Prostate gland (tissue), 2 donors: ENCODE measurements at regions of chr16 and their contacts with region 1.

Region 1: GRCh38 chr16:74275002-74275636 is 21.5 kb upstream of the PSMD7 start:
- DNase-seq: no peak
- H3K4me3 ChIP-seq: no peak overlapping the region
- H3K27ac ChIP-seq: no peak overlapping the region
- H3K4me1 ChIP-seq: no peaks in the 10 kb centered on the region
- H3K27me3 ChIP-seq: no peaks in the 10 kb centered on the region
- CTCF ChIP-seq: peak; percentile 23 to 52 (median 33)
- POLR2A ChIP-seq: no peak

Region 2: GRCh38 chr16:74064120-74064735 is 210.9 kb before region 1 on chr16:
- intact Hi-C with region 1: loop called (anchors 10 kb)
- DNase-seq: no peak
- H3K4me3 ChIP-seq: no peak overlapping the region
- H3K27ac ChIP-seq: no peak overlapping the region
- H3K4me1 ChIP-seq: no peaks in the 10 kb centered on the region
- H3K27me3 ChIP-seq: no peaks in the 10 kb centered on the region
- CTCF ChIP-seq: no peak
- POLR2A ChIP-seq: no peak

Region 3: GRCh38 chr16:74309789-74310781 is 35.0 kb after region 1 on chr16:
- intact Hi-C with region 1: no loop called
- DNase-seq: peak; percentile 31
- H3K4me3 ChIP-seq: no peak overlapping the region
- H3K27ac ChIP-seq: no peak overlapping the region
- H3K4me1 ChIP-seq: no peaks in the 10 kb centered on the region
- H3K27me3 ChIP-seq: no peaks in the 10 kb centered on the region
- CTCF ChIP-seq: peak; percentile 41 to 71 (median 52)
- POLR2A ChIP-seq: no peak

Region 4: DNA sequence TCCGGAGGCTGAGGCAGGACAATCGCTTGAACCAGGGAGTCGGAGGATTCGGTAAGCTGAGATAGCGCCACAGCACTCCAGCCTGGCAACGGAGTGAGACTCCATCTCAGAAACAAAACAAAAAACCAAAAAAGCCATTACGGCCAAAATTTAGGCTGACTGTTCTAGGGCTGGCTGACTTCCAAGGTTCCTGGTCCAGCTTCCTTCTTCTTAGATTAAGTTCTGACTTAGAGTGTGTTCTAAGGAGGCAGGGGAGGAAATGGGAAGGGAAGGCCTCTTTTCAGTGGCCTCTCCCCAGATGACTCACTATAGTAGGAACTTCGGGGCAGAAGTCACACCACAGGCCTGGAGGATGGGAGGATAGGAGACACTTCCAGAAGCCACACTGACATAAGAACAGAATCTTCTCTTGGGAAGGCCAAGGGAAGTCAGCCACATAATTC is 173.9 kb after region 1 on chr16:
- intact Hi-C with region 1: no loop called
- DNase-seq: no peak
- H3K4me3 ChIP-seq: no peak overlapping the region
- H3K27ac ChIP-seq: peak overlapping the region; percentile 33 to 51
- H3K4me1 ChIP-seq: no peaks in the 10 kb centered on the region
- H3K27me3 ChIP-seq: no peaks in the 10 kb centered on the region
- CTCF ChIP-seq: no peak
- POLR2A ChIP-seq: no peak

Region 5: DNA sequence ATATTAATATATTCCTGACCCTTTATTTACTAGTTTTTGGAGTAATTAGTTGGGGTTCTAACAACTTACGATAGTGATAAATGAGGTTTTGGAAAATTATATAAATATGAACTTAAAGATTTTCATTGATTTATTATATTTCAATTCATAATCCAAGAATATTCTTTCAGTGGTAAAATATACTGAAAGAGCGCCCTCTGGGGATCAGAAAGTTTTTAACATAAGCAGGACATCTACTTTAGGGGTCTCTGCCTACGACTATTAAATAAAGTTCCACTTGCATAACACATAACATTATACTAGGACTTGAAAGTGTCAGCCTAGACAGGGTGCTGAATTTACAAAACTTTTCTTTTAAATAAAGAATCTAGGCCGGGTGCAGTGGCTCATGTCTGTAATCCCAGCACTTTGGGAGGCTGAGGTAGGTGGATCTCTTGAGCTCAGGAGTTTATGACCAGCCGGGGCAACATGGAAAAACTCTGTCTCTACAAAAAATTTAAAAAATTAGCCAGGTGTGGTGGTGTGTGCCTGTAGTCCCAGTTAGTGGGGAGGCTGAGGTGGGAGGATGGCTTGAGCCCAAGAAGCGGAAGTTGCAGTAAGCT is 375.9 kb after region 1 on chr16:
- intact Hi-C with region 1: no loop called
- DNase-seq: no peak
- H3K4me3 ChIP-seq: no peak overlapping the region
- H3K27ac ChIP-seq: no peak overlapping the region
- H3K4me1 ChIP-seq: no peaks in the 10 kb centered on the region
- H3K27me3 ChIP-seq: no peaks in the 10 kb centered on the region
- CTCF ChIP-seq: peak in 1 of 4 experiments; percentile 34
- POLR2A ChIP-seq: no peak